Right cardiac atrium (tissue), 5 donors: ENCODE measurements at regions of chr3 and their contacts with region 1.

Region 1: GRCh38 chr3:193788189-193788991 is 195.4 kb downstream of the OPA1 start:
- DNase-seq: peak; percentile 73 to 89 (median 81)
- ATAC-seq: peak; percentile 93
- H3K4me3 ChIP-seq: no peak overlapping the region
- H3K27ac ChIP-seq: peak overlapping the region; percentile 2
- H3K4me1 ChIP-seq: peaks cover 3% of the 10 kb centered on the region
- H3K27me3 ChIP-seq: no peaks in the 10 kb centered on the region

Region 2: DNA sequence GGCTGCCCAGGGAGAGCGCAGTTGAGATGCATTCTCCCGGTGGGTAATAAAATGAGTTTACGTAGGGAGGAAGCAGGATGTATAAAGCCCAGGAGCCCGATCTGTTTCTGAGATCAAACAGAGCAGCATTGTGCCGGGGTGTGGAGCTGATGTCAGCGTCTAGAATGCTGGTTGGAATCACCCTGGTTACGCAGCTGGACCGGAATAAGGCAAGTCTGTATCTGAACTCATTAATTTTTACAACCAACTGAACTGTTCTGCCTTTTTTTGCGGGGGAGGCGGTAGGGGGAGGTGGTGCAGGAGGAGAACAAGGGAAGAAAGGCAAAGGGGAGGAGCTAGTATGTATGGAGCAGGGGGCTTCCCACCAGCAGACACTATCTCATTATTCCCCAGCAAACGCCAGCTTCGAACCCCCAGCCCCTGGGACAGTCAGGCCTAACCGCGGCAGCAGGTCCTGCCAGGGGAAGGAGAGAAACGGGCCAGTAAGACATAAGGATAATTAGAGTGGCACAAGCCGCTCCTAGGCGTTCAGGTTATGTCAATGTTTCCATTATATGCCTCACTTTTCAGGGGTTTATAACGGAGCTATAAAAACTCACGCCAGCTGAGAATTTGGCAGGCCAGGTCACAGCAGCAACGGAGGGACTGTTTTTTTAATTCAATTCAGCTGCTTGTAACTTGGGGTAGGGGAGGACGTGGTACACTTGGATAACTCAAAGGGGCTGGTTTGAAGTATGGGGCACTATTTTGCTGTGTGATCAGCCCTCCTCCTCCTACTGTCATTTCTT is 172.3 kb after region 1 on chr3:
- intact Hi-C with region 1: loop called in 1 of 4 experiments (anchors 10 kb)
- DNase-seq: peak in 1 of 3 donors; percentile 39
- ATAC-seq: peak; percentile 78 to 79
- H3K4me3 ChIP-seq: no peak overlapping the region
- H3K27ac ChIP-seq: no peak overlapping the region
- H3K4me1 ChIP-seq: no peaks in the 10 kb centered on the region
- H3K27me3 ChIP-seq: no peaks in the 10 kb centered on the region

Region 3: GRCh38 chr3:193971261-193971751 is 182.9 kb after region 1 on chr3:
- intact Hi-C with region 1: loop called in 2 of 4 experiments (anchors 10 kb)
- DNase-seq: peak in 1 of 3 donors; percentile 65
- ATAC-seq: peak in 1 of 2 donors; percentile 12
- H3K4me3 ChIP-seq: no peak overlapping the region
- H3K27ac ChIP-seq: no peak overlapping the region
- H3K4me1 ChIP-seq: peaks cover 4% of the 10 kb centered on the region
- H3K27me3 ChIP-seq: no peaks in the 10 kb centered on the region

Region 4: GRCh38 chr3:194003125-194004057 is 215.0 kb after region 1 on chr3:
- intact Hi-C with region 1: loop called in 1 of 4 experiments (anchors 10 kb)
- DNase-seq: peak; percentile 94 to 97 (median 96)
- ATAC-seq: peak; percentile 94
- H3K4me3 ChIP-seq: peak overlapping the region; percentile 31
- H3K27ac ChIP-seq: peak overlapping the region; percentile 83
- H3K4me1 ChIP-seq: peaks cover 5% of the 10 kb centered on the region
- H3K27me3 ChIP-seq: no peaks in the 10 kb centered on the region